ENCODE measurements at regions of chr4 and their contacts with region 1.

Region 1: DNA sequence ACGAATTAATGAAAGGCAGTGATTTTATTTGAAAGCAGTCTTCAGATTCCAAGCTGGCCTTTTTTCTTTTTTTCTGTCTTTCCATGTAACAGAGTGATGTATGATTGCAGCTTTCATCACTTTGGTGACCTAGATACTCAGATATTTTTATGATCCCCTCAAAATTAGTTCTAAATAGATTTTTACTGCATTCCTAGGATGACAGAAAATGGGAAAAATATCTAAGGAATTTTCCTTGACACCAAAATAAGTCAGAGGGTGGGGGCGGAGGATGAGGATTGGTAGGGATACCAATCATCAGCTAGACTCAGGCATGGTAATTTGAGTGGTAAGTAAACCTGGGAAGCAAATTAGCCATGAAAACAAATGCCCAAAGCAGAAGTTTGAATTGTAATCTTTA is 11.9 kb upstream of the HMGB2 start:
- DNase-seq: no peak
- ATAC-seq: no peak
- H3K4me3 Mint-ChIP-seq: no peak overlapping the region
- H3K27ac Mint-ChIP-seq: no peak overlapping the region
- H3K4me1 Mint-ChIP-seq: peaks cover 6% of the 10 kb centered on the region
- H3K27me3 Mint-ChIP-seq: no peaks in the 10 kb centered on the region
- CTCF ChIP-seq: no peak

Region 2: DNA sequence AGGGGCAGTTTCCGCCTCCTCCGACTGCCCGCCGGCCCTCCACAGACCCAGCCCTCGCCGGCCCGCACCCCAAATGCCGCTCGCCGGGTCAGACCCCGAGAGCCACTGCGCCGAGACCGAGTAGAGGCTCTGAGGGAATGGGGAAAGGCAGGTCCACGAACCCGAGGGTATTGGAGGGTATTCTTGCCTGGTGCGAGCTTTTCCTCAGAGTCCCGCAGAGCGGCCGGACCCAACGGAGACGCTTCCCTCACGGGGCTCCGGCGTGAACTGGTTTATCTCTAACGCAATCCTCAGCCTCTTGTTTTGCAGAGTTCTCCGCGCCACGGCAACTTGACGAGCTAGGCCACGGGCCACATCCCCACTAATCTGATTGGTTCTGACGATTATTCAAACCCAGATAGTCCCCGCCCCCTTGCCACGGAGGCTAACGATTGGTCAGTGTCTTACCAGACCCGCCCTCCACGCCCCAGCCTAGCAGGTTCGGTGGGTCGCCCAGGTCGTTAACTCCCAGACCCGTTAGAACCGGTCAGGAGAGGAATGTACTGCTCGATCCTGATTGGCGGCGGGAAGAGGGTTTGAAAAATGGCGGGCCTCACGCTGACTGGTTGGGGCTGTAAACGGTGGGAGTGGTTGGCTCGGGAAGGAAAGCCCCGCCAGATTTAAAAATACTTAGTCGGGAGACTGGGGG is 11.8 kb before region 1 on chr4 and contains the start of gene HMGB2:
- CTCF ChIA-PET with region 1: interaction called, 4 read pairs
- POLR2A ChIA-PET with region 1: interaction called, 19 read pairs
- intact Hi-C with region 1: no loop called
- DNase-seq: peak; percentile 95
- ATAC-seq: peak; percentile 93
- H3K4me3 Mint-ChIP-seq: peak within 1 kb of the TSS; percentile 96
- H3K27ac Mint-ChIP-seq: peak within 1 kb of the TSS; percentile 98
- H3K4me1 Mint-ChIP-seq: peaks cover 25% of the 10 kb centered on the region
- H3K27me3 Mint-ChIP-seq: no peaks in the 10 kb centered on the region
- CTCF ChIP-seq: no peak
- total RNA-seq, gene HMGB2: 63.2 and 63.9 TPM in 2 replicates

Region 3: GRCh38 chr4:173405840-173406606 is 59.9 kb after region 1 on chr4:
- CTCF ChIA-PET with region 1: no interaction called
- POLR2A ChIA-PET with region 1: no interaction called
- intact Hi-C with region 1: no loop called
- DNase-seq: no peak
- ATAC-seq: no peak
- H3K4me3 Mint-ChIP-seq: no peak overlapping the region
- H3K27ac Mint-ChIP-seq: no peak overlapping the region
- H3K4me1 Mint-ChIP-seq: no peaks in the 10 kb centered on the region
- H3K27me3 Mint-ChIP-seq: no peaks in the 10 kb centered on the region
- CTCF ChIP-seq: no peak

Region 4: GRCh38 chr4:173461170-173461569 is 115.1 kb after region 1 on chr4:
- CTCF ChIA-PET with region 1: no interaction called
- POLR2A ChIA-PET with region 1: no interaction called
- intact Hi-C with region 1: no loop called
- DNase-seq: no peak
- ATAC-seq: no peak
- H3K4me3 Mint-ChIP-seq: no peak overlapping the region
- H3K27ac Mint-ChIP-seq: no peak overlapping the region
- H3K4me1 Mint-ChIP-seq: no peaks in the 10 kb centered on the region
- H3K27me3 Mint-ChIP-seq: no peaks in the 10 kb centered on the region
- CTCF ChIP-seq: no peak

Region 5: GRCh38 chr4:173556398-173557131 is 210.5 kb after region 1 on chr4:
- CTCF ChIA-PET with region 1: no interaction called
- POLR2A ChIA-PET with region 1: no interaction called
- intact Hi-C with region 1: no loop called
- DNase-seq: no peak
- ATAC-seq: no peak
- H3K4me3 Mint-ChIP-seq: no peak overlapping the region
- H3K27ac Mint-ChIP-seq: no peak overlapping the region
- H3K4me1 Mint-ChIP-seq: no peaks in the 10 kb centered on the region
- H3K27me3 Mint-ChIP-seq: peaks cover 8% of the 10 kb centered on the region
- CTCF ChIP-seq: no peak